Esophagus muscularis mucosa (tissue), 4 donors: ENCODE measurements at regions of chr12 and their contacts with region 1.

Region 1: GRCh38 chr12:66144791-66145754 is 14.5 kb upstream of the LLPH start:
- DNase-seq: no peak
- H3K4me3 ChIP-seq: no peak overlapping the region
- H3K27ac ChIP-seq: peak overlapping the region; percentile 4 to 47 (median 26)
- H3K4me1 ChIP-seq: peaks cover 0 to 13% (median 5%) of the 10 kb centered on the region in 4 donors
- H3K27me3 ChIP-seq: no peaks in the 10 kb centered on the region
- CTCF ChIP-seq: peak; percentile 42 to 60 (median 46)
- EP300 ChIP-seq: no peak
- POLR2A ChIP-seq: no peak

Region 2: DNA sequence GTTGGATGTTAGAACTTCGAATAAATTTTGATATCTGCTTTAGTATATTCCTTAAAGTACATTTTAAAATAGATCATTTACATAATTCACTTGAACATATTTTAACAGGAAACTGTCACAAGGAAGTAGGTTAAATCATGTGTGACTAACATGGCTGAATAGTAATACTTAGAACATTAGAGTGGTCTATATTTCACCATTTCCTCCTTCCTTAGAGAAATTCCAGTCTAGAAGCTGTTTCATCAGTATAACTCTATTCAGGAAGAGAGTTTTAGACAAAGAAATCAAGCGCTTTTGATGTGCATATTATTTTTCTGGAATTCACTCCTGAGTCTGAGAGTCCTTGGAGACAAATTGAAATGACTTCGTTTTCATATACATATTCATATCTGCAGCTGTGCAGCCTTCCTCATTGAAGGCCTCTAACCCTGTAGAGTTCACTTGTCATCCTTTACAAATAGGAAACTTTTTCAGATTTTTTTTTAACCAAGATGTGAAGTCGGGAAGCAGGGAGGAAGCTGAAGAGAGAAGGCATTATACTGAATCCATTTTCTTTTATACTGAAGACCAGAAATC is 72.4 kb after region 1 on chr12:
- intact Hi-C with region 1: no loop called
- DNase-seq: no peak
- H3K4me3 ChIP-seq: no peak overlapping the region
- H3K27ac ChIP-seq: no peak overlapping the region
- H3K4me1 ChIP-seq: no peaks in the 10 kb centered on the region
- H3K27me3 ChIP-seq: peaks cover 0 to 3% (median 0%) of the 10 kb centered on the region in 4 donors
- CTCF ChIP-seq: no peak
- EP300 ChIP-seq: no peak
- POLR2A ChIP-seq: no peak

Region 3: GRCh38 chr12:66235626-66236281 is 90.7 kb after region 1 on chr12:
- intact Hi-C with region 1: loop called (anchors 10 kb)
- DNase-seq: no peak
- H3K4me3 ChIP-seq: peak overlapping the region; percentile 50 to 64 (median 54)
- H3K27ac ChIP-seq: peak overlapping the region; percentile 38 to 59 (median 49)
- H3K4me1 ChIP-seq: peaks cover 0 to 12% (median 2%) of the 10 kb centered on the region in 4 donors
- H3K27me3 ChIP-seq: peaks cover 0 to 48% (median 0%) of the 10 kb centered on the region in 4 donors
- CTCF ChIP-seq: peak in 1 of 3 experiments; percentile 11
- EP300 ChIP-seq: no peak
- POLR2A ChIP-seq: no peak

Region 4: DNA sequence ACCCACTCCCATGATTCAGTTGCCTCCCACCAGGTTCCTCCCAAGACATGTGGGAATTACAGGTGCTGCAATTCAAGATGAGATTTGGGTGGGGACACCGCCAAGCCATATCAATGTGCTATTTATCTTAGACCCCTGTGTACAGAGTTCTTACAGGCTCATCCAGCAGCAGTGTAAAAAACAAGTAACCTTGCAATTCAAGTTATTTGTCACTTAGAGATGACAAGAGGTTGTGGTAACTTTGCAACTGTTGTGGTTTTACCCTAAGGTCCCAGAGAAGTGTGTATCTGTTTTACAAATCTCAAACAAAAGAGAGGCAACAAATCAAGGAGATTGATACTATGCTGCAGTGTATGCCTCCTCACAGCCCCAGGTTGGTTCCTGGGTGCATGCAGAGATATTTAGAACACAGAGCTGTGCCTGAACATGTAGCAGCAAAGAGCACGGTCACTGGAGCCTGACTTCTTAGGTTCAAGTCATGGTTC is 145.7 kb after region 1 on chr12:
- intact Hi-C with region 1: loop called (anchors 10 kb)
- DNase-seq: no peak
- H3K4me3 ChIP-seq: no peak overlapping the region
- H3K27ac ChIP-seq: no peak overlapping the region
- H3K4me1 ChIP-seq: no peaks in the 10 kb centered on the region
- H3K27me3 ChIP-seq: no peaks in the 10 kb centered on the region
- CTCF ChIP-seq: no peak
- EP300 ChIP-seq: no peak
- POLR2A ChIP-seq: no peak